ENCODE measurements at regions of chr16 and their contacts with region 1.

Region 1: DNA sequence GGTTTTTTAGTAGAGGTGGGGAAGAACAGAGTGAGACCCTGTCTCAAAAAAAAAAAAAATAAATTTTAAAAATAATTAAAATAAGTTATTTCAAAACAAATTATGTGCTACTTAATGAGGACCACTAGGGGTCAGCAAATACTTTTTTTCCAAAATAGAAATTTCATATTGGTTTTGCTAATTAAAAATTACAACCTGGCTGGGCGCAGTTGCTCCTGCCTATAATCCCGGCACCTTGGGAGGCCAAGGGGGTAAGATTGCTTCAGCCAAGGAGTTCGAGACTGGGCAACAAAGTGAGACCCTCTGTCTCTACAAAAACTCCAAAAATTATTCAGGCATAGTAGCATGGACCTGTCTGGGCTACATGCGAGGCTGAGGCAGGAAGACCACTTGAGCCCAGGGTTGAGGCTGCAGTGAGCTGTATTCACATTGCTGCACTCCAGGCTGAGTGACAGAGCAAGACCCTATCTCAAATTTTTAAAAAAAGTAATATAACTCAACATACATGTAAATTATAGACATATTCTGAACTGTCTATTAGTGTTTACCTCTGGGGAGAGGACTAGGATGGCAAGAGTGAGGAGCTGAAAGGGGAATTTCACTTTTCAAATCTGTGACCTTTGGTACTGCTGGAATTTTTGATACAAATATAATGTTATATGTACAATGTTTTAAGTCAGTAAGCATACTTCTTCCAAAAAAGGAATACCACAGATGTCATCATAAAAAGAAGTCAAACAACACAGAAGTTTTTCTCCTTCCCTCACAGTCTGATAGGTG is 8.1 kb downstream of the MEIOB start:
- DNase-seq: no peak
- ATAC-seq: no peak
- H3K4me3 Mint-ChIP-seq: no peak overlapping the region
- H3K27ac Mint-ChIP-seq: no peak overlapping the region
- H3K4me1 Mint-ChIP-seq: no peaks in the 10 kb centered on the region
- H3K27me3 Mint-ChIP-seq: peaks cover 15% of the 10 kb centered on the region

Region 2: DNA sequence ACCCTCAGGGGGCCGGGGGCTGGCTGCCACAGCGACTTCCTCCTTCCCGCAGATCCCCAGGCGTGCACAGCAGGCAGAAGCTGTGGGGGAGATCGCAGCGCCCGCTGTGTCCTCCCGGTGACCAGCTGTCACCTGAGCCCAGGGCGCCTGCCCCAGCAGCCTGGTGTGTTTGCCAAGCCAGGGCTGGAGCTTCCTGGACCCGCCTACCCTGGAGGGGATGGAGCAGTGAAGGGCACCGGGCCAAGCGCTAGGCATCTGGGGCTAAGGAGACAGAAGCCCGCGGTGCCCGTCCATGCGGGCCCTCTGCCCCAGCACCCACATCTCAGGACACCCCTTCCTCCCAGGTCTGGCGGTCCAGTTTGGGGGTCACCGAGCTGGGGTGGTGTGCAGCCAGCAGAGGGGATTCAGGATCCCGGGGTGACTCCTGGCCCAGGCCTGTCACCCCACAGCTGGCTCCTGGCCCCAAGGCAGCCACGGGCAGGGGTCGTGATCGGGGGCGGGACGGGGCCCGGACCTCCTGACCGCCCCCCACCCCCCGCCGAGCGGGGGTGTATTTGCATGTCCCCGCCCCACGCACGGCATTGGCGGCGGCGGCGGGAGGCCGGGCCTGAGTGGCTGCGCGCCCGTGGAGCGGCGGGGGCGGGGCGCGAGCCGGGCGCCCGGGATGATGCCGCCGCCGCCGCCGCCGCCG is 284.3 kb after region 1 on chr16 and contains the start of gene RAB26:
- CTCF ChIA-PET with region 1: no interaction called
- POLR2A ChIA-PET with region 1: no interaction called
- intact Hi-C with region 1: loop called (anchors 5 to 10 kb)
- DNase-seq: peak; percentile 64
- ATAC-seq: peak; percentile 31
- H3K4me3 Mint-ChIP-seq: peak within 1 kb of the TSS; percentile 38
- H3K27ac Mint-ChIP-seq: no peak within 1 kb of the TSS
- H3K4me1 Mint-ChIP-seq: peaks cover 15% of the 10 kb centered on the region
- H3K27me3 Mint-ChIP-seq: no peaks in the 10 kb centered on the region
- total RNA-seq, gene RAB26: 0.21 TPM in 1 of 2 experiments, not detected in the other